ENCODE measurements at regions of chr12 and their contacts with region 1.

Region 1: DNA sequence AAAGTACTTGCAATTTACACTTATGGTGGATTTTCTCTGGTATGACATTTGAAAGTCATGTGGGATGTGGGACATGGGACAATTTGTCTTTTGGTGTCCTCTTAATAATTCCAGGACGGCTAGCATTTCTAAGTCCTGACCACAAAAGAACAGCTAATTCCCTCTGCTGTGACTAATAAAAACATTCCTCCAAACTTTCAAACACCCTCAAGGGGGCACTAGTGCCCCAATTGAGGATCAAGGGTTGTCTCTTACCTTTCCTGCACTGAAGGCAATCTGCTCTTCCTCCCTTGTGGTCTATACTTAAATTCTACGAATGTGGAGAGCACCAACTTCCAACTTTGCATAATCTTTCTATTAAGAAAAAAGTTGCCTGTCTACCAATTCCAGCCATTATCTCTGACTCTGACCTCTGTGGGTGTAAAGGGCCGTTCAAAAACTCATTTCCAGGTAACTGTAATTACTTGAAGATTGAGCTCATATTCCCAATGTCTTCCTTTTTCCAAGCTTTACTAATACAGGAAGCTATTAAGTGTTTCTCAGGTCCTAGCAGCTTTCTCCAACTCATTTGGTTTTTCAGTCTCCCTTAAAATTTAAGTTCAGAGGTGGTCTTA is 210.2 kb downstream of the PTPRO start:
- DNase-seq: no peak
- ATAC-seq: peak; percentile 68 to 74
- H3K4me3 ChIP-seq: no peak overlapping the region
- H3K27ac ChIP-seq: no peak overlapping the region
- H3K4me1 ChIP-seq: no peaks in the 10 kb centered on the region
- H3K27me3 ChIP-seq: no peaks in the 10 kb centered on the region
- CTCF ChIP-seq: peak in 2 of 5 experiments; percentile 37 to 43
- POLR2A ChIP-seq: no peak

Region 2: GRCh38 chr12:15033641-15034040 is 498.8 kb before region 1 on chr12:
- in situ Hi-C with region 1: no loop called
- intact Hi-C with region 1: no loop called
- DNase-seq: no peak
- ATAC-seq: no peak
- H3K4me3 ChIP-seq: peak overlapping the region in 1 of 4 donors; percentile 16
- H3K27ac ChIP-seq: no peak overlapping the region
- H3K4me1 ChIP-seq: peaks cover 9 to 21% of the 10 kb centered on the region in 2 donors
- H3K27me3 ChIP-seq: no peaks in the 10 kb centered on the region
- CTCF ChIP-seq: no peak
- POLR2A ChIP-seq: no peak

Region 3: DNA sequence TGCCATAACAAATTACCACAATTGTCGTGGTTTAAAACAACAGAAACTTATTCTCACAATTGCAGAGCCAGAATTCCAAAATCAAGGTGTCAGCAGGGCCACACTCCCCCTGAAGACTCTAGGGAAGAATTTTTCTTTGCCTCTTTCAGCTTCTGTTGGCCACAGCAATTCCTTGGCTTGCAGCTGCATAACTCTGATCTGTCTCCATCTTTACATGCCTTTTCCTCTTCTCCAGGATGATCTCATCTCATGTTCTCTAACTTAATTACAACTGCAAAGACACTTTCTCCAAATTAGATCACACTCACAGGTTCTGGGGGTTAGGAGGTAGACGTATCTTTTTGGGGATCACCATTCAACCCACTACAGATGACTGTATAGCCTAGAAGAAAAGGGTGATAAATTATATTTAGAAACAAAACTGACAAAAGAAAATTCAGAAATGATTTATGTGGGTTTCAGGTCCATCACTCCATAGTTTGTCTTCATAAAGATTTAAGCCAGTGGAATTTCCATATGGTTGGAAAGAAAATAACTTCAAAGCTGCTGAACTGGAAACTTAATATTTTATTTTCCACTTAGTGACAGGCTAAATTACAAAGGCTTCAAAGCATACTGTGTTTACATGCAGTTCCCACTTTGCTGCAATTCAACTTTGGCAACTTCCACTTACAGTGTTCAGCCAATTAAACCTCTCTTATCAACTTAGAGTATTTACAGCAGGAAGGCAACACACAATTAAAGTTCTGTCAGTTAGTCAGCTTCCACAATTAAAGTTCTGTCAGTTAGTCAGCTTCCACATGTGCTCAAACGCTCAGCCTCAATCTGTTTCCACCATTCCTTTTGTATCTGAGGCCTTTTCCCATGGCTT is 43.4 kb after region 1 on chr12:
- in situ Hi-C with region 1: loop called in 1 of 4 experiments (anchors 5 kb)
- intact Hi-C with region 1: loop called (anchors 5 kb)
- DNase-seq: no peak
- ATAC-seq: no peak
- H3K4me3 ChIP-seq: no peak overlapping the region
- H3K27ac ChIP-seq: no peak overlapping the region
- H3K4me1 ChIP-seq: no peaks in the 10 kb centered on the region
- H3K27me3 ChIP-seq: no peaks in the 10 kb centered on the region
- CTCF ChIP-seq: no peak
- POLR2A ChIP-seq: no peak

Region 4: GRCh38 chr12:15584366-15585041 is 52.0 kb after region 1 on chr12:
- in situ Hi-C with region 1: loop called in 1 of 4 experiments (anchors 5 kb)
- intact Hi-C with region 1: loop called (anchors 5 kb)
- DNase-seq: no peak
- ATAC-seq: no peak
- H3K4me3 ChIP-seq: no peak overlapping the region
- H3K27ac ChIP-seq: no peak overlapping the region
- H3K4me1 ChIP-seq: no peaks in the 10 kb centered on the region
- H3K27me3 ChIP-seq: no peaks in the 10 kb centered on the region
- CTCF ChIP-seq: peak; percentile 30 to 60 (median 48)
- POLR2A ChIP-seq: no peak

Region 5: GRCh38 chr12:15636060-15636890 is 103.8 kb after region 1 on chr12:
- in situ Hi-C with region 1: no loop called
- intact Hi-C with region 1: no loop called
- DNase-seq: no peak
- ATAC-seq: no peak
- H3K4me3 ChIP-seq: no peak overlapping the region
- H3K27ac ChIP-seq: no peak overlapping the region
- H3K4me1 ChIP-seq: peaks cover 0 to 2% of the 10 kb centered on the region in 2 donors
- H3K27me3 ChIP-seq: no peaks in the 10 kb centered on the region
- CTCF ChIP-seq: no peak
- POLR2A ChIP-seq: no peak

Region 6: GRCh38 chr12:15679146-15679545 is 146.7 kb after region 1 on chr12:
- in situ Hi-C with region 1: no loop called
- intact Hi-C with region 1: no loop called
- DNase-seq: no peak
- ATAC-seq: no peak
- H3K4me3 ChIP-seq: no peak overlapping the region
- H3K27ac ChIP-seq: no peak overlapping the region
- H3K4me1 ChIP-seq: no peaks in the 10 kb centered on the region
- H3K27me3 ChIP-seq: no peaks in the 10 kb centered on the region
- CTCF ChIP-seq: no peak
- POLR2A ChIP-seq: no peak